ENCODE measurements at regions of chrX and their contacts with region 1.

Region 1: DNA sequence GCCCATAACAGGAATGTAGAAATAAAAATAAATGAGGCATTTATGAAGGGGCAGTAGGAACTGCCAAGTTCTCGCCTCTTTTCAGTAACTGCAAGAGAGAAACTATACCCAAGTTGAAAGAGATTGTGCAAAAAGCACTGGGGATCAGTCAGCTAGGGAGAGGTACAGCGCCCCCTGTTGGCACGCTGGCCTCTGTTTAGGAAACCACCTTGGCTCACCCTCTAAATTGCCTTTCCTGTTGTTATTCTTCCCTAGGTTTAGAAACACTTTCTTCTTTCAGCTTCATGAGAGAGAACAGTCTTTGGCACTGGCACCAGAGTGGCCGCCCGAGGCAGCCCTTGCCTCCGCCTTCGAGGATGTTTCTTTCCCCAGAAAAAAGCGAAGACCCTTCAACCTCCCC is 348.5 kb downstream of the MID1IP1 start:
- DNase-seq: peak; percentile 40
- ATAC-seq: peak; percentile 53; the same call in 1 of the 2 replicates
- H3K4me3 ChIP-seq: no peak overlapping the region
- H3K27ac ChIP-seq: no peak overlapping the region
- H3K4me1 ChIP-seq: no peaks in the 10 kb centered on the region
- H3K27me3 ChIP-seq: peaks cover 28% of the 10 kb centered on the region
- CTCF ChIP-seq: peak; percentile 54
- POLR2A ChIP-seq: no peak
- RAD21 ChIP-seq: peak; percentile 64

Region 2: DNA sequence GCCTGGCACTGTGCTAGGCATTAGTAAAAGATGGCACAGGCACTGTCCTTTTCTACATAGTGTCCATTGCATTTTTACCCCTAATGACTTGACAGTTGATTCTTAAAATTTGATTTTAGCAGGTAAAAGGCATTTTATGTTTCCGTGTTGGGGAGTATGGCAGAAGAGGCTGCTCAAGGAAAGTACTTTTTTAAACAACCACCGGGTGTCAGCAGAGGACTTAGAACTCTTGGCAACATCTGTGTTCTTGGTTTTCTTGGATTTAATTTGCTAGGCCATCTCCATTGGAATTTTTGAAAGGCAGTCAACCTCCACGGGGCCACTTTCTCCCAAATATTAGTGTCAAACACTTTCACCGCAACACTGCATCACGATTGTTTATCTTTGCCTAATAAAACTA is 485.5 kb before region 1 on chrX:
- CTCF ChIA-PET with region 1: no interaction called
- POLR2A ChIA-PET with region 1: no interaction called
- dilution Hi-C with region 1: no loop called
- in situ Hi-C with region 1: no loop called
- intact Hi-C with region 1: loop called (anchors 5 kb)
- DNase-seq: peak; percentile 43
- ATAC-seq: peak; percentile 72
- H3K4me3 ChIP-seq: no peak overlapping the region
- H3K27ac ChIP-seq: no peak overlapping the region
- H3K4me1 ChIP-seq: no peaks in the 10 kb centered on the region
- H3K27me3 ChIP-seq: peaks cover 4% of the 10 kb centered on the region
- CTCF ChIP-seq: peak; percentile 50
- POLR2A ChIP-seq: no peak
- RAD21 ChIP-seq: peak; percentile 52

Region 3: GRCh38 chrX:38754102-38754790 is 395.5 kb before region 1 on chrX:
- CTCF ChIA-PET with region 1: interaction called, 3 read pairs
- POLR2A ChIA-PET with region 1: no interaction called
- dilution Hi-C with region 1: no loop called
- in situ Hi-C with region 1: loop called (anchors 5 kb)
- intact Hi-C with region 1: loop called (anchors 1 kb)
- DNase-seq: peak; percentile 58
- ATAC-seq: peak; percentile 82
- H3K4me3 ChIP-seq: no peak overlapping the region
- H3K27ac ChIP-seq: no peak overlapping the region
- H3K4me1 ChIP-seq: no peaks in the 10 kb centered on the region
- H3K27me3 ChIP-seq: peaks cover 32% of the 10 kb centered on the region
- CTCF ChIP-seq: peak; percentile 64
- POLR2A ChIP-seq: no peak
- RAD21 ChIP-seq: peak; percentile 79

Region 4: DNA sequence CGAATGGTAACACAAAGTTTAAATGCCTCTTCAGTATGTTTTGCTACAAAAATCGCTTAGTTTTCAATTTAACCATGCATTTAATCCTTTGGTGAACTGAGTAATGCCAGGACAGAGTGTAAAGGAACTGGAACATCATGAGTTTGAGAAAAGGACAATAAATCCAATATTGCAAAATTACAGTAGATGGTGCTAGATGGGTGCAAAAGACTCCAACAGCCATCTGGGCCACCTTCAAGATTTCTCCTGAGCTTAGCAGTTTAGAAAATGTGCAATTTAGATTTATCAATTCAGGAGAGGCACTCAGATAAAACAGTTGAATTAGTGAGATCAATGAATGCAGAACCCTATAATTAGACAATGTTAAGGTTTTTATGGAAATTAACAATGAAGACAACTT is 381.7 kb before region 1 on chrX:
- CTCF ChIA-PET with region 1: interaction called, 3 read pairs
- POLR2A ChIA-PET with region 1: no interaction called
- dilution Hi-C with region 1: no loop called
- in situ Hi-C with region 1: no loop called
- intact Hi-C with region 1: loop called (anchors 5 kb)
- DNase-seq: peak; percentile 33
- ATAC-seq: 0 out of 2 replicates have a peak, but pooled peaks have one; percentile 37
- H3K4me3 ChIP-seq: no peak overlapping the region
- H3K27ac ChIP-seq: no peak overlapping the region
- H3K4me1 ChIP-seq: no peaks in the 10 kb centered on the region
- H3K27me3 ChIP-seq: peaks cover 5% of the 10 kb centered on the region
- CTCF ChIP-seq: peak; percentile 62
- POLR2A ChIP-seq: no peak
- RAD21 ChIP-seq: peak; percentile 81

Region 5: GRCh38 chrX:38968344-38969216 is 181.2 kb before region 1 on chrX:
- CTCF ChIA-PET with region 1: no interaction called
- POLR2A ChIA-PET with region 1: no interaction called
- dilution Hi-C with region 1: no loop called
- in situ Hi-C with region 1: no loop called
- intact Hi-C with region 1: no loop called
- DNase-seq: no peak
- ATAC-seq: no peak
- H3K4me3 ChIP-seq: no peak overlapping the region
- H3K27ac ChIP-seq: no peak overlapping the region
- H3K4me1 ChIP-seq: no peaks in the 10 kb centered on the region
- H3K27me3 ChIP-seq: peaks cover 7% of the 10 kb centered on the region
- CTCF ChIP-seq: no peak
- POLR2A ChIP-seq: no peak
- RAD21 ChIP-seq: no peak

Region 6: DNA sequence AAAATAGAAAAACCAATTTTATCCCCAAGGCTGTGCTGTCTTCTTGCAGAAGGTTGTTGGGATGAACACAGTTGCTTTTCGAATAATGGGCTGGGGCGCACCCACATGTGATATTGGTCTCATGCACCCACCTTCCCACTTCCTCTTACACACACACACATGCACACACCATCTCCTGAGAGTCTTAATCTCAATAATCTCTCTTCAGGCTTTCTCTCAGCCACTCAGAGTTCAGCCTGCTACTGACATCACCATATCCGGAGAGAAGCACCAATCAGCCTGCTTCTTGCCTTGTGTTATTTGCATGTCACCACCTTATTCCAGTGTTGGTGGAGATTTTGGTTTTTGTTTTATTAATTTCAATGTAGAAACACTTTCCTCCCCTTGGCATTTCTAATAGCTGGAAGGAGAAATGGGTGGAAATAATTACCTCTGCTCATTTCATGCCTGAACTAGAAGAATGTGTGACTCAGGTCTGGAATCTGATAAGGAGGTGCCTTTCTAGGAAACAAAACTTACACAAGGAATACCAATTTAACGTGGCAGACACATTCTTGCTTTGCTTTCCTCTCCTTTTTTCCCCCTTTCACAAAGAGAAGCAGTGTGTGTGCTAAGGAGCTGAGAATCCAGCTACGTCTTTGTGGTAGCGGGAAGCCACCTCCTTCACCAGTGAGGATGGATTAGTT is 51.7 kb after region 1 on chrX:
- CTCF ChIA-PET with region 1: no interaction called
- POLR2A ChIA-PET with region 1: no interaction called
- dilution Hi-C with region 1: no loop called
- in situ Hi-C with region 1: loop called (anchors 10 kb)
- intact Hi-C with region 1: no loop called
- DNase-seq: no peak
- ATAC-seq: no peak
- H3K4me3 ChIP-seq: no peak overlapping the region
- H3K27ac ChIP-seq: no peak overlapping the region
- H3K4me1 ChIP-seq: no peaks in the 10 kb centered on the region
- H3K27me3 ChIP-seq: peaks cover 9% of the 10 kb centered on the region; the same call in 1 of the 2 replicates
- CTCF ChIP-seq: no peak
- POLR2A ChIP-seq: no peak
- RAD21 ChIP-seq: no peak

Region 7: DNA sequence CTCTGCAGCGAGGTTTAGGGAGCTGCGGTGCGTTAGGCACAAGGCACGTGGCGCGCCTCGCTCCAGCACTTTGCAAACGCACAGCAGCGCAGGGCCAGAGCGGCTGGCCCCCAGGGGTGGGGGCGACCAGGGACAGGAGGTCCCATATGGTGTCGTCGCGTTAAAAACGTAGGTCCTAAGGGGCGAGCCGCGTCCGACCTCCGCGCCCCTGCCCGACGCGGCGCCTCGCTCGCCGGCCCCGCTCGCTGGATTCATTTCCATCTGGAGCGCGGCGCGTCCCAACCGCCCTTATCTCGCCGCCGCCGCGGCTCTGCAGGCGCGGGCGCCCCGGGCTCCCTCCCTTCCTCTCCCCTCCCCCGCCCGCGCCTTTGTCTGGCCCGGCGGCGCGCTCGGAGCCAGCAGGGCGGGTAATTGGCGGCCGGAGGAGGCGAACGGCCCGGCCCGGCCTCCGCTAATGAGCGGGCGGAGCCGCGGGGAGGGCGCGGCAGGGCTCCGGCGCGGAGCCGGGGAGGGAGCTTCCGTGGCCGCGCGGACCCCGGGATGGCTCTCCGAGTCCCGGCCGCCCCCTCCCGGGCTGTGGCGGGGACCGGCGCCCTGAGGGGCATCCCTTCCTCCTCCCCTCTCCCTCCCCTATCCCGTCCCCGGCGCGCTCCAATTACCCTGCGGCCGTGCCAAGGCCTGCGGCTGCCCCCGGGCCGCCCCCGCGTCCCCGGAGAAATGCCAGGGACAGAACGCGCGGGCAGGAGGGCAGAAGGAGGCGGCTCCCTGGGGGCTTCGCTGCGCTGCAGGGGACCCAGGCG is 539.0 kb after region 1 on chrX:
- CTCF ChIA-PET with region 1: no interaction called
- POLR2A ChIA-PET with region 1: no interaction called
- dilution Hi-C with region 1: no loop called
- in situ Hi-C with region 1: no loop called
- intact Hi-C with region 1: no loop called
- DNase-seq: peak; percentile 7
- ATAC-seq: peak; percentile 91
- H3K4me3 ChIP-seq: peak overlapping the region; percentile 31
- H3K27ac ChIP-seq: no peak overlapping the region
- H3K4me1 ChIP-seq: no peaks in the 10 kb centered on the region
- H3K27me3 ChIP-seq: peaks cover 40% of the 10 kb centered on the region
- CTCF ChIP-seq: no peak
- POLR2A ChIP-seq: no peak
- RAD21 ChIP-seq: no peak

Measured in IMR-90 (cell line).